ENCODE measurements at regions of chr4 and their contacts with region 1.

Region 1: DNA sequence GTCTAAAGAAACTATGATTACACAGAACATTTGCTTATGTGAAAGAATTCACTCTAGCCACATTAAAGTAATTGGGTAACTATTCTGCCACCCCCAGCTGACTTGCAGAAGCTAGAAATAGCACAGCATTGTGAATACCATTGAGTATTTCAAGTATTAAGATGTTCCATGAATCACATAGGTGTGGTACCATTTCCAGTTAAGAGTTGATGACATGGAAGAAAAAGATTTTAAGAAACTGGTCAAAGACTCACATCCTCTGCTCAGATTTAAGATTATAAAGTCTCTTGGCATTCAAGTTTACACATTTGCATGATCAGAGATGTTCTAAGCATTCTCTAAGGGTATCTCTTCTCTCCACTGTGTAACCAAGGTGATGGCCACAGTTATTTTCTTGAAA is 287.5 kb downstream of the CAMK2D start:
- DNase-seq: no peak
- H3K4me3 ChIP-seq: no peak overlapping the region
- H3K27ac ChIP-seq: no peak overlapping the region
- H3K4me1 ChIP-seq: peaks cover 0 to 41% (median 5%) of the 10 kb centered on the region in 4 donors
- H3K27me3 ChIP-seq: no peaks in the 10 kb centered on the region
- CTCF ChIP-seq: no peak

Region 2: GRCh38 chr4:112910109-112910736 is 563.8 kb before region 1 on chr4:
- intact Hi-C with region 1: loop called (anchors 5 kb)
- DNase-seq: no peak
- H3K4me3 ChIP-seq: peak overlapping the region; percentile 40 to 41
- H3K27ac ChIP-seq: peak overlapping the region in 1 of 2 donors; percentile 49
- H3K4me1 ChIP-seq: peaks cover 0 to 7% (median 2%) of the 10 kb centered on the region in 4 donors
- H3K27me3 ChIP-seq: no peaks in the 10 kb centered on the region
- CTCF ChIP-seq: peak; percentile 17 to 22

Region 3: DNA sequence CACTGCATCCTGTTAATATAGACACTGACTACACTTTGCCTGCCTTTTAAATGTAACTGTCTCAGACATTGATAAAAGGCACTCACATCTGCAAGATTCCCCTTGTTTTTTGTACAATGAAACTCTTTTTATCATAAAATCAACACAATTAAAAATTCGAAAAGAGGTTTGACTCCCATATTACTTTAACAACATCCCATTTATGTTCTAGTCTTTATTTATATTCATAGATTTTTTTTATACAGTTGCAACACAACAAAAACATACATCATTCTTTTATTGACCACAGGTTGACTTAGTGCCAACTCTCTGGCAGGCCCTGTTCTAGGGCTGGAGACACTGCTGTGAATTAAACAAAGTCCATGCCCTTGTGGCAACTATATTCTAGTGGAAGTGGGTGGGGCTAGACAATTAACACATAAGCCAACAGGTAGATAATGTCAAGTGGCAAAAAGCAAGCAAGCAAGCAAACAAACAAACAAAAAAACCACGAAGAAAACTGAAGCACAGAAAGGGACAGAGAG is 387.8 kb before region 1 on chr4:
- intact Hi-C with region 1: no loop called
- DNase-seq: no peak
- H3K4me3 ChIP-seq: no peak overlapping the region
- H3K27ac ChIP-seq: no peak overlapping the region
- H3K4me1 ChIP-seq: peaks cover 0 to 5% (median 0%) of the 10 kb centered on the region in 4 donors
- H3K27me3 ChIP-seq: no peaks in the 10 kb centered on the region
- CTCF ChIP-seq: no peak

Region 4: GRCh38 chr4:113435893-113436292 is 38.1 kb before region 1 on chr4:
- intact Hi-C with region 1: loop called (anchors 5 kb)
- DNase-seq: peak in 1 of 2 donors; percentile 74
- H3K4me3 ChIP-seq: no peak overlapping the region
- H3K27ac ChIP-seq: peak overlapping the region; percentile 25 to 59
- H3K4me1 ChIP-seq: peaks cover 0 to 61% (median 24%) of the 10 kb centered on the region in 4 donors
- H3K27me3 ChIP-seq: no peaks in the 10 kb centered on the region
- CTCF ChIP-seq: no peak

Measured in tibial artery (tissue), 4 donors.